K562 (cell line): ENCODE measurements at regions of chrX and their contacts with region 1.

Region 1: GRCh38 chrX:133804072-133804471 is 181.3 kb downstream of the GPC3 start:
- DNase-seq: no peak
- ATAC-seq: no peak
- H3K4me3 ChIP-seq: no peak overlapping the region
- H3K27ac ChIP-seq: no peak overlapping the region
- H3K4me1 ChIP-seq: no peaks in the 10 kb centered on the region
- H3K27me3 ChIP-seq: no peaks in the 10 kb centered on the region
- CTCF ChIP-seq: no peak
- EP300 ChIP-seq: no peak
- POLR2A ChIP-seq: no peak
- RAD21 ChIP-seq: no peak

Region 2: DNA sequence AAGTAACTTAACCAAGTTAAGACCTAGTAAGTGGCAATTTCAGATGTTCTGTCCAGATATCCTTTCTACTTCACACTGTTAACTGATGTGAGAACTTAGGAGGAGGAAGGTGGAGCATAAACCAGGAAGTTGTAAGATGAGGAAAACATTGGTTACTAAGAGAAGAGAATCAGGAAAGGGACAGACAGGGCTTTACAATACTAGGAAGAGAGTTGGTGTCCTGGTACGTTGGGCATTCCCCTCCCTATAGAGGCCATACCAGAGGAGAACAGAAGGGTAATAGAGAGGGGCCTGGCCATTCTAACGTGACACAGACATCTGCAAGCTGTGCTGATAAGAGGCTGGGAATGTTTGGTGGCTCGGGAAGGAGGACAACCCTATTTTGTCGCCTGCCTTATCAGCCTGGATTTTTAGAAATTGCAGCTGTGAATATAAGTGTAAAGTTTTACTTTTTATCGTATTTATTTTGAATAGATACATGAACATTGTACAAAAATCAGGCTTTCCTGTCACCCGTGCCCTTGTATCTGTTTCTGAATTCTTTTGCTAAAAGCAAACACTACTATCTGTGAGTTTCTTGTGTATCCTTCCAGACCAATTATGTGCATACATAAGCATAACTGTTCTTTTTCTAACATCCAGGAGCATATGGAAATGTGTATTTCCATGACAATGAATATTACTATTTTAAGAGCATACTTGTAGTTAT is 602.4 kb after region 1 on chrX:
- CTCF ChIA-PET with region 1: no interaction called
- POLR2A ChIA-PET with region 1: no interaction called
- in situ Hi-C with region 1: no loop called
- intact Hi-C with region 1: loop called (anchors 10 kb)
- DNase-seq: peak; percentile 32 to 61 (median 36)
- ATAC-seq: peak; percentile 87
- H3K4me3 ChIP-seq: no peak overlapping the region
- H3K27ac ChIP-seq: peak overlapping the region; percentile 79
- H3K4me1 ChIP-seq: peaks cover 7 to 18% of the 10 kb centered on the region in 2 experiments; a peak in 3 of 5 replicates
- H3K27me3 ChIP-seq: no peaks in the 10 kb centered on the region
- CTCF ChIP-seq: no peak
- EP300 ChIP-seq: no peak
- POLR2A ChIP-seq: no peak
- RAD21 ChIP-seq: no peak